ENCODE measurements at regions of chr14 and their contacts with region 1.

Region 1: DNA sequence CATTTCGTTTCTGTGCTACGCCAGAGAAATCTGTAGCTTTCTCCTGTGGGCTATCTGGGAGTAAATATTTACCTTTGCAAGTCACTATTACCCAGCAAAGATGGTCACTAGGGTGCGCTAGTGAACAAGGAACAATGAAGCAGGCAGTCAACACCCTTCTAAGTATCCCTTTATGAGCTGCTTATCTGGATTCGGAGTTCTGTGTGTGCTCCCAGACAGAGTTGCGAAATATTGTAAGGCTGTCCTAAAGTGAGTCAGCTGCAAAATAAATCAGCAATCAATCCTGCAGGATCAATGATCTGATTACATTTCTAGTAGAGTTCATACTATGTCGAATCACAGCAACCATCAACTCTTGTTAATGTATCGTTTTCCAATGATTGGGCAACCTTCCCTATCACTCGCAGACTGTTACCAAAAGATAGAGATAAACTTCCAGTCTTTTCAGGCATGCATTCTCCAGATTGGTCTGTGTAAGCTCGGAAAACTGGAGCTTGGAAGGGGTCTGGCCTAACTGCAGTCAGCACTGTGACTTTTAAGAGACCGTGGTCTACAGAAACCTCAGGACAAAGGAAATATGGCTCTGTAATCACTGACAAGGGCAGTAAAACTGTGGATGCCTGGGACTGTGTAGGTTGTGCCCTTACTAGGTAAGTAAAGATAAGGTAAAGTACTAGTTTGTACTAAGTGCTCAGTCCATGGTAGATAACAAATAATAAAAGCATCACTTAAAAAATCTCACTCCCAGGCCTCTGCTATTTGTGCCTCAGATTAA is 133.5 kb downstream of the KCNK10 start:
- DNase-seq: peak; percentile 68
- ATAC-seq: peak; percentile 95 to 98

Region 2: DNA sequence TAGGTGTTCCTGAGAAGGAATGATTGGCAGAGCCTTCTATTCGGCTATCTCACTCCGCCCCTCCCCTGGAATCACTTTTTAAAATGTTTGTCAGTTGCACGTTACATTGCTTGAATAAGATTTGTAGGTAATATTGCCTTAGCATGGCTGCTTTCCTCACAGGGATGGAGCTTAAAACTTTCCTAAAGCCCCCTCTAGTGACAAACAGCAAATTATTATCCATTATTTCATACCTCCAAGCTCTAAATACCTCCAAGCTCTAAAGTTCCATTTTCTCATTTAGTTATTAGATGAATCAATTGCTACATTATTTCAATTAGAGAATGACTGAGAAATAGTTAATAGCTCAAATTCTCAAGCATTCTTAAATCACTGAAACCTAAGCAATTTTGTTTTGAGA is 190.8 kb after region 1 on chr14:
- intact Hi-C with region 1: loop called in 1 of 2 experiments (anchors 5 kb)
- DNase-seq: no peak
- ATAC-seq: no peak

Region 3: DNA sequence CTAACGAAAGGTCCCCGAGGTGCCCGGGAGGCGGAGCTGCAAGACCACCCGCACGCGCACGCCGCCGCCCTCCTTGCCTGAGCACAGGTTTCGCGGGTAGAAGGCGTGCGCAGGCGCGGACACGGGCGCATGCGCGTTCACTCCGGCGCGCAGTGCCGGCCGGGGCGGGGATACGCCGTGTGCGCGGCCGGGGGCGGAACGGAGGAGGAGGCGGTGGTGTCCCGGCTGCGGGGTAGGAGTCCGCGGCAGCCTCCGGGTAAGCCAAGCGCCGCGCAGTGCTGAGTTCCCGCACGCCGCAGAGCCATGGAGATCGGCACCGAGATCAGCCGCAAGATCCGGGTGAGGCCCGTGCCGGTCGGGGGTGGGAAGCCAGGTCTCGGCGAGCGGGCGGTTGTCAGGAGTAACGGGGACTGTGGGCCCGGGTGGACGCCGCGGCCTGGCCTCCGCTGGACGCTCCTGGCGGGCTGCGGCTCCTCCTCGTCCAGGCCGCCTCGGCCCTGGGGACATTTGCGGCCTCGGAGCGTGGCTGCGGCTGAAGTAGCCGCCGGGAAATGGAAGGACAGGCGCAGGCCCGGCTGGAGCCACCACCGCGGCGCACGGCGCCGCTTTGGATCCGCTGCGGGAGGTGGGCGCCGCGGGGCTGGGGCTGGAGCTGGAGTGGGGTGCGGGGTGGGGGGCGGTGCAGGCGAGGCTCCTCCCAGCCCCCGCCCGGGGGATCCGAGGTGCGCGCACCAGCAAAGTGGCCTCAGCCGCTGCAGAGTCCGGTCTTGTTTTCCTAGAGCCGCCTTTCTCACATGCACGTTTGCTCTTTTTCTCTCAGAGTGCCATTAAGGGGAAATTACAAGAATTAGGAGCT is 373.5 kb after region 1 on chr14 and contains the start of gene ZC3H14:
- intact Hi-C with region 1: loop called in 1 of 2 experiments (anchors 5 kb)
- DNase-seq: peak; percentile 88
- ATAC-seq: peak; percentile 98 to 99
- total RNA-seq, gene ZC3H14: 38.0 to 41.4 TPM